Activated T-helper 1 cell treated with anti-CD3 and anti-CD28 coated beads, Interleukin-12 subunit alpha, Interleukin-12 subunit beta, Interleukin-2, Interleukin-4 antibody, amounts not matched to agents 30 ng/mL and 10 ng/mL and 1 ng/mL, durations not matched to agents 14 hours and 24 hours and 36 hours (primary cell): ENCODE measurements at regions of chr6 and their contacts with region 1.

Region 1: GRCh38 chr6:15735567-15736265 is 72.9 kb upstream of the DTNBP1 start:
- DNase-seq: no peak
- H3K4me3 Mint-ChIP-seq: peak overlapping the region; percentile 6
- H3K27ac Mint-ChIP-seq: peak overlapping the region; percentile 78
- H3K4me1 Mint-ChIP-seq: peaks cover 38% of the 10 kb centered on the region
- H3K27me3 Mint-ChIP-seq: peaks cover 2% of the 10 kb centered on the region

Region 2: GRCh38 chr6:15715060-15715459 is 20.7 kb before region 1 on chr6:
- intact Hi-C with region 1: loop called (anchors 2 kb)
- DNase-seq: no peak
- H3K4me3 Mint-ChIP-seq: no peak overlapping the region
- H3K27ac Mint-ChIP-seq: peak overlapping the region; percentile 45
- H3K4me1 Mint-ChIP-seq: peaks cover 11% of the 10 kb centered on the region
- H3K27me3 Mint-ChIP-seq: no peaks in the 10 kb centered on the region